Heart right ventricle (tissue), 16 donors: ENCODE measurements at regions of chr5 and their contacts with region 1.

Region 1: DNA sequence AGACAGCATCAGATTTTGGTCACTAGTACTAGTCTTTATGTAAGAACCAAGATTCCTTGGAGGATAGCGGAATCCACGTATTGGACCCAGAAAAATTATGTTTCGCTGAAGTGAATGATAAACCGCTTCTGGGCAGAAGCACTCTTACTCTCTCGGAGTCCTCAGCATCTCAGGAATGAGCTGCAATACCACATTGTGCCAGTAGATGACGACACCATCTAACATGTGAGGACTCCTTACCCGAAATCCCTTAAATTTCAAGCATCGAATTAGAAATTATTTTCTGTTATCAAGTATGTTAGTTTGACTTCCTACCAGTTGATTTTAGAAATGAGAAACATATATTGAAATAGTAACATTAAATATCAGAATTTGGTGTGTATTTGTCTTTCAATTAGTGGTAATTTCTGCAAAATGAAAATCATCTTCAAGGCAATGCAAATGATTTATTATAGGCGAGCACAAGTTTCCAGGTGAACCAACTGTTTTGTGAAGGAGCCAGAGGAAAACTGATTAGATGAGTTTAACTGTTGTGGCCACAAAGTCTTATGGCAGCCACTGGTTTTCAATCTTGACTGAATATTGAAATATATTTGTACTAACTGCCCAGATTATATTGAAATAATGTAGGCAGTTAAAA is 66.0 kb upstream of the CAMK4 start:
- DNase-seq: peak in 1 of 2 donors; percentile 73
- ATAC-seq: peak in 4 of 8 donors; percentile 38 to 69 (median 64)
- H3K4me3 ChIP-seq: no peak overlapping the region
- H3K27ac ChIP-seq: no peak overlapping the region
- H3K4me1 ChIP-seq: no peaks in the 10 kb centered on the region
- H3K27me3 ChIP-seq: peaks cover 0 to 5% (median 0%) of the 10 kb centered on the region in 7 donors
- CTCF ChIP-seq: peak; percentile 95 to 100 (median 100)

Region 2: GRCh38 chr5:110899566-110900412 is 258.4 kb before region 1 on chr5:
- intact Hi-C with region 1: no loop called
- DNase-seq: no peak
- ATAC-seq: no peak
- H3K4me3 ChIP-seq: no peak overlapping the region
- H3K27ac ChIP-seq: no peak overlapping the region
- H3K4me1 ChIP-seq: no peaks in the 10 kb centered on the region
- H3K27me3 ChIP-seq: no peaks in the 10 kb centered on the region
- CTCF ChIP-seq: no peak

Region 3: GRCh38 chr5:111278845-111279504 is 120.8 kb after region 1 on chr5:
- intact Hi-C with region 1: loop called in 9 of 10 experiments (anchors 2 to 10 kb)
- DNase-seq: peak; percentile 34 to 52
- ATAC-seq: peak in 4 of 8 donors; percentile 25 to 59 (median 59)
- H3K4me3 ChIP-seq: no peak overlapping the region
- H3K27ac ChIP-seq: no peak overlapping the region
- H3K4me1 ChIP-seq: no peaks in the 10 kb centered on the region
- H3K27me3 ChIP-seq: peaks cover 0 to 5% (median 0%) of the 10 kb centered on the region in 7 donors
- CTCF ChIP-seq: peak; percentile 48 to 77 (median 67)

Region 4: DNA sequence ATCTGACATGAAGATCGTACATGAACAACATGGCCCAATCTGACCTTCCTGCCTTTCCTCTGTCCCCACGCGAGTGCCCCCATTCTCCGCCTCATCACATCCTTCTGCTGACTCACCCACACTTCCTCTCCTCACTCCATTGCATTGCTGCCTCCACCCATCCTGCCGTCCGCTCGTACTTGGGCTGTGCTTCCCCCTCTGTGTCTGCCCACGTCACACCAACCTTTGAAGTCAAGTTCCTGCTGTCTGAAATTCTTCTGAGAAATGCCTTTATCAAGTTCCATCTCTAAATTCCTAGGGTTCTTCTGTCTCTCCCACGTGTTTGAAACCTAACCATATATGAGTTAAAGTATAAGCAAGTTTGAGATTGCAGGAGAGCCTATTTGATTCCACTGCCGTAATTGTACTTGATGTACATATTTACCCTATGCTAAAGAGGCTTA is 372.1 kb after region 1 on chr5:
- intact Hi-C with region 1: loop called in 1 of 10 experiments (anchors 5 kb)
- DNase-seq: peak; percentile 60 to 82
- ATAC-seq: peak; percentile 92 to 100 (median 98)
- H3K4me3 ChIP-seq: no peak overlapping the region
- H3K27ac ChIP-seq: peak overlapping the region in 9 of 10 donors; percentile 24 to 81 (median 64)
- H3K4me1 ChIP-seq: peaks cover 0 to 39% (median 0%) of the 10 kb centered on the region in 9 donors
- H3K27me3 ChIP-seq: no peaks in the 10 kb centered on the region
- CTCF ChIP-seq: no peak